GM12878 (cell line): ENCODE measurements at regions of chr10 and their contacts with region 1.

Region 1: DNA sequence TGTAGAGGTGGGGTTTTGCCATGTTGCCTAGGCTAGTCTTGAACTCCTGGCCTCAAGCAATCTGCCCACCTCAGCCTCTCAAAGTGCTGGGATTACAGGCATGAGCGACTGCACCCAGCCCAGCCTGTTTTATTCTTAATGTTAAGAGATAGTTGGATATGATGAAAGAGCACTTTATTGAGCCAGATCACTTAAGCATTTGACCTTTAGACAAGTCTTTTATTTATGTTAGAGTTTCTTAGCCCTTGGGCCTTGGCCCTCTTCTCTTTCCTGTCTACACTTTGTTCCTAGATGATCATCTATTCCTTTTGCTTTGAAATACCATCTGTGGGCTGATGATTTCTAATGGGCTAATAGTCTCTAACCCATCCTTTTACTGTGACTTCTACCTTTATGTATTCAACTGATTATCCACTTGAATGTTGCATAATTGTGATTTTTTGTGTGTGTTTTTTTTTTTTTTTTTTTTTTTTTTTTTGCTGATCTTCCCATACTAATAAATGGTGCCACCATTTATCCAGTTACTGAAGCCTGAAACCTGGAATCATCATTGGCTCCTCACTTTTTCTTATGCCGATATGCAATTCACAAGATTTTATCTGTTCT is 34.8 kb downstream of the BTRC start:
- DNase-seq: no peak
- ATAC-seq: no peak
- H3K4me3 ChIP-seq: no peak overlapping the region
- H3K27ac ChIP-seq: no peak overlapping the region
- H3K4me1 ChIP-seq: no peaks in the 10 kb centered on the region
- H3K27me3 ChIP-seq: no peaks in the 10 kb centered on the region
- CTCF ChIP-seq: no peak
- EP300 ChIP-seq: no peak
- POLR2A ChIP-seq: no peak
- RAD21 ChIP-seq: no peak

Region 2: GRCh38 chr10:101405001-101405400 is 16.2 kb after region 1 on chr10:
- CTCF ChIA-PET with region 1: interaction called, 3 read pairs
- POLR2A ChIA-PET with region 1: interaction called, 10 read pairs
- RAD21 ChIA-PET with region 1: interaction called, 3 read pairs
- SMC1A ChIA-PET with region 1: interaction called, 3 read pairs
- in situ Hi-C with region 1: no loop called
- intact Hi-C with region 1: no loop called
- DNase-seq: no peak
- ATAC-seq: no peak
- H3K4me3 ChIP-seq: no peak overlapping the region
- H3K27ac ChIP-seq: no peak overlapping the region
- H3K4me1 ChIP-seq: no peaks in the 10 kb centered on the region
- H3K27me3 ChIP-seq: no peaks in the 10 kb centered on the region
- CTCF ChIP-seq: no peak
- EP300 ChIP-seq: no peak
- POLR2A ChIP-seq: no peak
- RAD21 ChIP-seq: no peak